B cell (primary cell): ENCODE measurements at regions of chr20 and their contacts with region 1.

Region 1: DNA sequence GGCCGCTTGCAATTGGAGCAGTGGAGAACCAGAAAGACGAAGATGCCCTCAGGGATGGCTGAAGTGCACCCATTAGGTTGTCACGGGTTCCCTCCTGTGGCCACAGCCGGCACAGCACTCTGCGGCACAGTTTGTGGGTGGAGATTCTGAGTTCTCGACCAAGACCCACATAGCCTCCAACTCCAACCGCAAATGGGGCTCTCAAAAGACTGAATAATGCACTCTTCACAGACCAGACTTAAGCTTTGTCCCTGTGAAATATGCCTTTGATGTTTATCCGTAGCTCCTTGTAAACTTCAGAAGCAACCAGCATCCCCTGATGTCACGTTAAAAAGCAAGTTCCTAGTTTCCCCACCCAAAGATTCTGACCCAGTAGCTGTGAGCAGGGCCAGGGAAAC is 934 bp upstream of the CST9 start:
- DNase-seq: peak; percentile 54
- ATAC-seq: peak; percentile 39
- H3K4me3 ChIP-seq: no peak overlapping the region
- H3K4me3 Mint-ChIP-seq: no peak overlapping the region
- H3K27ac ChIP-seq: no peak overlapping the region
- H3K27ac Mint-ChIP-seq: no peak overlapping the region
- H3K4me1 ChIP-seq: no peaks in the 10 kb centered on the region
- H3K4me1 Mint-ChIP-seq: no peaks in the 10 kb centered on the region
- H3K27me3 ChIP-seq: no peaks in the 10 kb centered on the region
- H3K27me3 Mint-ChIP-seq: peaks cover 3% of the 10 kb centered on the region
- CTCF ChIP-seq: peak; percentile 77

Region 2: GRCh38 chr20:23350196-23350903 is 256.3 kb before region 1 on chr20 and contains the start of gene NXT1:
- CTCF ChIA-PET with region 1: no interaction called
- POLR2A ChIA-PET with region 1: no interaction called
- intact Hi-C with region 1: loop called (anchors 5 kb)
- DNase-seq: peak; percentile 98
- ATAC-seq: peak; percentile 83
- H3K4me3 ChIP-seq: peak within 1 kb of the TSS; percentile 82 to 96 (median 85)
- H3K4me3 Mint-ChIP-seq: peak within 1 kb of the TSS; percentile 97
- H3K27ac ChIP-seq: peak within 1 kb of the TSS; percentile 96 to 98
- H3K27ac Mint-ChIP-seq: peak within 1 kb of the TSS; percentile 99
- H3K4me1 ChIP-seq: peaks cover 19 to 23% of the 10 kb centered on the region in 2 donors
- H3K4me1 Mint-ChIP-seq: peaks cover 30% of the 10 kb centered on the region
- H3K27me3 ChIP-seq: no peaks in the 10 kb centered on the region
- H3K27me3 Mint-ChIP-seq: no peaks in the 10 kb centered on the region
- CTCF ChIP-seq: no peak
- total RNA-seq, gene NXT1: 21.4 and 22.5 TPM in 2 replicates

Region 3: GRCh38 chr20:23622839-23623343 is 16.2 kb after region 1 on chr20:
- CTCF ChIA-PET with region 1: no interaction called
- POLR2A ChIA-PET with region 1: no interaction called
- intact Hi-C with region 1: no loop called
- DNase-seq: no peak
- ATAC-seq: no peak
- H3K4me3 ChIP-seq: no peak overlapping the region
- H3K4me3 Mint-ChIP-seq: no peak overlapping the region
- H3K27ac ChIP-seq: no peak overlapping the region
- H3K27ac Mint-ChIP-seq: no peak overlapping the region
- H3K4me1 ChIP-seq: peaks cover 0 to 6% of the 10 kb centered on the region in 2 donors
- H3K4me1 Mint-ChIP-seq: peaks cover 4% of the 10 kb centered on the region
- H3K27me3 ChIP-seq: peaks cover 0 to 3% (median 0%) of the 10 kb centered on the region in 4 experiments
- H3K27me3 Mint-ChIP-seq: peaks cover 19% of the 10 kb centered on the region
- CTCF ChIP-seq: no peak